Activated naive CD4-positive, alpha-beta T cell treated with anti-CD3 and anti-CD28 coated beads for 36 hours (primary cell): ENCODE measurements at regions of chr11 and their contacts with region 1.

Region 1: DNA sequence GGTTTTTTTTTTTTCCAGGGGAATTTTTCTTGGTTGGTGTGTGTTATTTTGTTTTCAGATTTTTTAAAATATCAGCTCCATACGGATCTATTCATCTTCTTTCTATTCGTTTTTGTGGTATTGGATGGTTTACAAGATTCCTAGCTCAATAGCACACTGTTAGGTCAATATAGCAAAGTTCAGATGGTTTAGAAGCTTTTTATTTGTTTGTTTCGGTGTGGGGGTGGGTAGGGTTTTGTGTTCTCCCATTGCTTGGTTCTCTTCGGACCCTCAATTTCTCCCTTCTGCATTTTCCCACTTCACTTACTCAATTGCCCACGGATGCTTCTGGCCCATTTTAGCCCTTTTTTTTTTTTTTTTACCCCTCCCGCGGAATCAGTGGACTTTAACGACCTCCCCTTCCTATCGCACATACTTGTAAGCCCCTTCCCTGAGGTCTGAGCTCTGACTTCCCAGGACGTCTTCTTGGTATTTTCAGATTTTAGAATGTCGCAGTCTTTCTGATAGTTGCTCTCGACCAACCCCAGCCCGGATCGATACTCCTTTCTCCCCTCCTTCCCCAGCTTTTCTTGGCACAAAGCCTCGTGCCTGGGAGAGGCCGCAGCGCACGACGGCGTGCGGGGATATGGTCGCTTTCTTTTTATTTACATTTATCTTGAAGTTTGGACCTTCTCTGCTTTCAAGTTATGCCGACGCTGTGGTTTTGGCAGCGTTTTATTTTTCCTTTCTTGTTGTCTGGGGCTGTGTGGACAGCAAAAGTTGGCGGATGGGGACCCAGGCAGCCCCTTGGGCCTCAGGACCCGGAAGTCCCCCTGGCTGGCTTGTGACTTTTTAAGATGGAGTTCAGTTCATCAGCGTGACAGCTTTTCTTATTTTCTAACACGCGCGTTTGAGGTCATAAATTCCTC is 4.4 kb upstream of the SPDYC start:
- DNase-seq: no peak
- H3K4me3 Mint-ChIP-seq: no peak overlapping the region
- H3K27ac Mint-ChIP-seq: no peak overlapping the region
- H3K4me1 Mint-ChIP-seq: peaks cover 2% of the 10 kb centered on the region
- H3K27me3 Mint-ChIP-seq: no peaks in the 10 kb centered on the region

Region 2: DNA sequence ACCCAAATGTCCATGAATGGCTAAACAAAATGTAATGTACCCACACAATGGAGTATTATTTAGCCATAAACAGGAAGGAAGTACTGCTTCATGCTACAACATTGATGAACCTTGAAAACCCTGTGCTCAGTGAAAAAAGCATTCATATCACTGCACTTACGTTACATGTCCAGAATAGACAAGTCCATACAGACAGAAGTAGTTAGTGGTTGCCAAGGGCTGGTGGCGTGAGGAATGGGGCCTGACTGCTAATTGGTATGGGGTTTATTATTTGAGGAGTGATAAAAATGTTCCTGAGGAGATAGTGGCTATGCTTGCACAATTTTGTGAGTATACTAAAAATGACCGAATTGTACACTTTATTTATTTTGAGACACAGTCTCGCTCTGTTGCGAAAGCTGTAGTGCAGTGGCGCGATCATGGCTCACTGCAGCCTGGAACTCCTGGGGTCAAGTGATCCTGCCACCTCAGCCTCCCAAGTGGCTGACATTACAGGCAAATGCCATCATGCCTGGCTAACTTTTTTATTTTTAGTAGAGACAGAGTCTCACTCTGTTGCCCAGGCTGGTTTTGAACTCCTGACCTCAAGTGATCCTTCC is 23.7 kb before region 1 on chr11:
- CTCF ChIA-PET with region 1: interaction called, 3 read pairs
- intact Hi-C with region 1: loop called (anchors 2 kb)
- DNase-seq: no peak
- H3K4me3 Mint-ChIP-seq: no peak overlapping the region
- H3K27ac Mint-ChIP-seq: no peak overlapping the region
- H3K4me1 Mint-ChIP-seq: no peaks in the 10 kb centered on the region
- H3K27me3 Mint-ChIP-seq: no peaks in the 10 kb centered on the region